HepG2 (cell line): ENCODE measurements at regions of chr1 and their contacts with region 1.

Region 1: DNA sequence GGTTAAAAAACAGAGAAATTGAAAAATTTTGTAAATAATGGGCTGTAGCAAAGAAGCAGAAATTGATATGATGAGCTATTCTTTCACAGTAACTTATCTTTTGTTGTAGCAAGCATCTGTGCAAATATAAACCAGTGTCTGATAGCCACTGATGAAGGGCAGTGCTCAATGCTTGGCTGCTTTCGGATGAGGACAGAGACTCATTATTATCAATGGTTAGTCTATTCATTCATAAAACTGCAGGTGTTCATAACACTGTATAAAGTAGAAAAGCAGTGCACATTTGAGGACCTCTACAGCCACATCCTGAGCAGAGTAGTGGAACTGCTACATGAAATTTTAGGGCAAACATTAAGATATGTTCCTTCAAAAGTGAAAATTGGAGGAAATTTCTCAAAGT is 107.2 kb downstream of the FAF1 start:
- DNase-seq: no peak
- ATAC-seq: peak; percentile 77
- H3K4me3 ChIP-seq: peak overlapping the region; percentile 12 to 37 (median 30); a peak in 5 of 6 replicates
- H3K27ac ChIP-seq: peak overlapping the region; percentile 75
- H3K4me1 ChIP-seq: peaks cover 58% of the 10 kb centered on the region
- H3K27me3 ChIP-seq: no peaks in the 10 kb centered on the region
- CTCF ChIP-seq: no peak
- EP300 ChIP-seq: no peak
- POLR2A ChIP-seq: no peak
- RAD21 ChIP-seq: no peak

Region 2: GRCh38 chr1:50774759-50775351 is 78.0 kb before region 1 on chr1:
- CTCF ChIA-PET with region 1: no interaction called
- POLR2A ChIA-PET with region 1: no interaction called
- in situ Hi-C with region 1: no loop called
- intact Hi-C with region 1: loop called (anchors 10 kb)
- DNase-seq: peak; percentile 63
- ATAC-seq: peak; percentile 59; the same call in 1 of the 3 replicates
- H3K4me3 ChIP-seq: no peak overlapping the region
- H3K27ac ChIP-seq: no peak overlapping the region
- H3K4me1 ChIP-seq: peaks cover 14% of the 10 kb centered on the region
- H3K27me3 ChIP-seq: no peaks in the 10 kb centered on the region
- CTCF ChIP-seq: peak; percentile 76
- EP300 ChIP-seq: no peak
- POLR2A ChIP-seq: no peak
- RAD21 ChIP-seq: peak; percentile 56

Region 3: GRCh38 chr1:51192213-51192843 is 339.4 kb after region 1 on chr1:
- CTCF ChIA-PET with region 1: no interaction called
- POLR2A ChIA-PET with region 1: no interaction called
- in situ Hi-C with region 1: no loop called
- intact Hi-C with region 1: no loop called
- DNase-seq: peak; percentile 34
- ATAC-seq: peak; percentile 50; the same call in 1 of the 3 replicates
- H3K4me3 ChIP-seq: no peak overlapping the region
- H3K27ac ChIP-seq: no peak overlapping the region
- H3K4me1 ChIP-seq: no peaks in the 10 kb centered on the region
- H3K27me3 ChIP-seq: no peaks in the 10 kb centered on the region
- CTCF ChIP-seq: peak; percentile 62
- EP300 ChIP-seq: no peak
- POLR2A ChIP-seq: no peak
- RAD21 ChIP-seq: no peak